ENCODE measurements at regions of chr3 and their contacts with region 1.

Region 1: DNA sequence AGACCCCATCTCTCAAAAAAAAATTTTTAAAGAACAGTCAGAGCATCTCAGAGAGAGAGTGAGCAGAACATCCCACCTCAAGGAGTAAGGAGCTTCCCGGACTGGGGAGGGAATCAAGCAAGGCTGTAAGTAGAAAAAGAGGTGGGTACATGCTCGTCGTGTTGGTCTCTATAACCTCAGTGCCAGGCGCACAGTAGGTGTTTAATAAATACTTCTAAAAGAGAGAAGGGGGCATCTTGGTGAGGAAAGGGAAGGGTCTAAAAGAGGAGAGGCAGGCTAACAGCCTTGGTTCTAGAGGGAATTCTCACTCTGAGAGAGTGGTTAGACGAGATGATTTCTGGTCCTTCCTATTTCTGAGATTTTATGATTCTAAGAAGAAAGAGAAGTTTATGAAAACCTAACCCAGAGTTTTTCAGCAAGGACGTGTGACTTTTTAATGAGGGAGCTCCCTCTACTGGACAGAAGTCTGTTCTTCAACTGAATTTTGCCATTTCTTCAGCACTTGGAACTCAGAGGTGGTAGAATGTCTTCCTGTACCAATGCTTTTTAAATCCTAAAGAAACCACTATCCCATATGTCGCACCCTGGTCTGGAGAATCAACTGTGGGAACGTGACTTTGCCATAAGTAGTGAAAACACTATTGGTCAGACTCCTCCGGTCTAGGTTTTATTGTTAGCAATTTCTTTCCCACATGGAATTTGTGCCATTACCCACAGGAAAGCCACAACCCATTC is 199.7 kb upstream of the LMCD1 start:
- DNase-seq: peak; percentile 26
- H3K4me3 ChIP-seq: no peak overlapping the region
- CTCF ChIP-seq: peak; percentile 59

Region 2: GRCh38 chr3:8290611-8291010 is 11.3 kb before region 1 on chr3:
- CTCF ChIA-PET with region 1: interaction called, 28 read pairs
- POLR2A ChIA-PET with region 1: no interaction called
- DNase-seq: no peak
- H3K4me3 ChIP-seq: no peak overlapping the region
- CTCF ChIP-seq: no peak

Region 3: GRCh38 chr3:8317661-8318649 is 16.1 kb after region 1 on chr3:
- CTCF ChIA-PET with region 1: interaction called, 22 read pairs
- POLR2A ChIA-PET with region 1: no interaction called
- DNase-seq: peak; percentile 40
- H3K4me3 ChIP-seq: no peak overlapping the region
- CTCF ChIP-seq: no peak

Region 4: GRCh38 chr3:8324740-8325139 is 22.8 kb after region 1 on chr3:
- CTCF ChIA-PET with region 1: interaction called, 22 read pairs
- POLR2A ChIA-PET with region 1: no interaction called
- DNase-seq: no peak
- H3K4me3 ChIP-seq: no peak overlapping the region
- CTCF ChIP-seq: peak; percentile 75

Region 5: GRCh38 chr3:8555113-8555661 is 253.3 kb after region 1 on chr3:
- CTCF ChIA-PET with region 1: no interaction called
- POLR2A ChIA-PET with region 1: no interaction called
- DNase-seq: peak; percentile 76
- H3K4me3 ChIP-seq: peak overlapping the region; percentile 15; the same call in 1 of the 2 replicates
- CTCF ChIP-seq: no peak